ENCODE measurements at regions of chr13 and their contacts with region 1.

Region 1: GRCh38 chr13:75760131-75761021 is 124.2 kb downstream of the LMO7 start:
- DNase-seq: peak; percentile 30
- ATAC-seq: peak; percentile 67
- H3K4me3 Mint-ChIP-seq: peak overlapping the region; percentile 67
- H3K27ac Mint-ChIP-seq: peak overlapping the region; percentile 82
- H3K4me1 Mint-ChIP-seq: peaks cover 70% of the 10 kb centered on the region
- H3K27me3 Mint-ChIP-seq: no peaks in the 10 kb centered on the region
- CTCF ChIP-seq: peak; percentile 46

Region 2: DNA sequence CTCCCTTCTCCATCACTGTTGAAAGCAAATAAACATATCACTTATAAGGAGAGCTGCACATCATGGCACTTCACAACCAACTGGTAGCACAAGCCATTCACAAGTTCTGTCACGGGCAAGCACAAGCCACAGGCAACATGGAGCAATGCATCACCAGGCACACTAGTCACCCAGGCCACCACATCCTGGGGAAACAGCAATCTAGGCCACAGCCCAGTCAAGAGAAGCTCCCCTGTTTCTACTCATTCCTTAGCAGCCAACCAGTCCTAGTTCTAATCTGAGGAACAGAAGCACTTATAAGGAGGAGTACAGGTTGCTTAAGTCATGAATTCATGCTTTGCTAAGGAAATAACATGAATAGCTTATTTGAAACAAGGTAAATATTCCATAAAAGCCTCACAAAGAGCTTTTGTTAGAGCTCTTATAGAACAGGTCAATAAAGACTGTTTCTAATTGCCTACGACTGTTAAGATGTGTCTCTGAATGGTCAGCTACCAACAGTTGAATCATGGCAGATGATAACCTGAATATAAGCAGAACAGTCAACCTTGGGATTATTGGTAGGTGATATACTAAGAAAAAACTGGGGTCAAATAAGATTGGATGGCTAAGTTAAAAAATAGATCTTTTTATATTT is 447.4 kb before region 1 on chr13:
- CTCF ChIA-PET with region 1: no interaction called
- POLR2A ChIA-PET with region 1: no interaction called
- intact Hi-C with region 1: loop called (anchors 10 kb)
- DNase-seq: peak; percentile 86
- ATAC-seq: peak; percentile 83
- H3K4me3 Mint-ChIP-seq: no peak overlapping the region
- H3K27ac Mint-ChIP-seq: peak overlapping the region; percentile 85
- H3K4me1 Mint-ChIP-seq: peaks cover 63% of the 10 kb centered on the region
- H3K27me3 Mint-ChIP-seq: no peaks in the 10 kb centered on the region
- CTCF ChIP-seq: no peak

Region 3: GRCh38 chr13:75687150-75687763 is 73.1 kb before region 1 on chr13:
- CTCF ChIA-PET with region 1: interaction called, 3 read pairs
- POLR2A ChIA-PET with region 1: no interaction called
- intact Hi-C with region 1: loop called (anchors 10 kb)
- DNase-seq: no peak
- ATAC-seq: no peak
- H3K4me3 Mint-ChIP-seq: no peak overlapping the region
- H3K27ac Mint-ChIP-seq: no peak overlapping the region
- H3K4me1 Mint-ChIP-seq: peaks cover 10% of the 10 kb centered on the region
- H3K27me3 Mint-ChIP-seq: no peaks in the 10 kb centered on the region
- CTCF ChIP-seq: peak; percentile 47

Region 4: GRCh38 chr13:75803164-75803611 is 42.8 kb after region 1 on chr13:
- CTCF ChIA-PET with region 1: interaction called, 9 read pairs
- POLR2A ChIA-PET with region 1: interaction called, 5 read pairs
- intact Hi-C with region 1: loop called (anchors 2 kb)
- DNase-seq: peak; percentile 20
- ATAC-seq: peak; percentile 72
- H3K4me3 Mint-ChIP-seq: peak overlapping the region; percentile 11
- H3K27ac Mint-ChIP-seq: peak overlapping the region; percentile 78
- H3K4me1 Mint-ChIP-seq: peaks cover 45% of the 10 kb centered on the region
- H3K27me3 Mint-ChIP-seq: no peaks in the 10 kb centered on the region
- CTCF ChIP-seq: no peak

Measured in activated CD8-positive, alpha-beta T cell treated with anti-CD3 and anti-CD28 coated beads for 36 hours (primary cell).